ENCODE measurements at regions of chr7 and their contacts with region 1.

Region 1: DNA sequence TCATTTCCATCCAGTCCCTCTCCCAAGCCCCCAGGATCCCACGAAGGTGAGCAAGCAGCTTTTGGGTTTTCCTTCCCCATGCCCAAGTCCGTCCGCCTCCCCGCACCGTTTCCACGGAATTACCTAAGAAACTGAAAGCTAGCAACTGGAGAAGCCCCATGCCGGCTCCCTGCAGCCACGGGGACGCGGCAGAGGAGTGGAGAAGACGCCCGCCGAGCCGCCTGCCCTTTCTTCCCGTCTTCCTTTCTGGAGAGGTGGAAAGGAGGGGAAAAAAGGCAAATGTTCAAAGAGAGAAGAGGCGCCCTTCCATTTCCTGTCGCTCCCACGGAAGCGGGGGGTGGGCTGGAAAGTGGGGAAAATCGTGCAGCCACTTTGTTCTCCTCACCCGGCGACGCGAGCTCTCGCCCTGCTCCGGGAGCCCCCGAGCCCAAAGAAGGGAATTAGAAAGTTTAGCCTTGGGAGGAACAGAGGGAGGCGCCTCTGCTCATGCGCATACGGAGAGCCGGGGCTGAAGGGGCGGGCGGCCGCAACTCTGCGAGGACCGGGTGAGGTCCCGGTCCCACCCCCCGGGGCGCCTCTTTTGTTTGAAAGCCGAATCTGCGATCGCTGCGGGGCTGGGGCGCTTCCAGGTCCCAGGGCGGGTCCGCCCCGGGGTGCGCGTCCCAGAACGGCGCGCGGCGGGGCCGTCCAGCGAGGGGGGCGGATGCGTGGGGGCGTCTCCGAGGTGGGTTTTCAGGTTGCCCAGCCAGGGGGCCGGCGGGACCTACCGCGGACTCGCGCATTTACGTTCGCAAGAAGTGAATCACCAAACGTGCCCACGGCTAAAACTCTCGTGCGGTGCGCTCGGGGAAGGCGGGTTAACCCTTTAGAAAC is at the start of gene LAMB1:
- DNase-seq: peak; percentile 77 to 78
- ATAC-seq: peak; percentile 71 to 84 (median 77)
- H3K4me3 ChIP-seq: peak within 1 kb of the TSS; percentile 52 to 88 (median 74)
- H3K27ac ChIP-seq: peak within 1 kb of the TSS; percentile 70 to 93 (median 86)
- H3K4me1 ChIP-seq: peaks cover 4 to 68% (median 44%) of the 10 kb centered on the region in 9 donors
- H3K27me3 ChIP-seq: peaks cover 0 to 58% (median 0%) of the 10 kb centered on the region in 7 donors
- CTCF ChIP-seq: no peak
- total RNA-seq, gene LAMB1: 33.3 to 84.8 (median 52.7) TPM

Region 2: DNA sequence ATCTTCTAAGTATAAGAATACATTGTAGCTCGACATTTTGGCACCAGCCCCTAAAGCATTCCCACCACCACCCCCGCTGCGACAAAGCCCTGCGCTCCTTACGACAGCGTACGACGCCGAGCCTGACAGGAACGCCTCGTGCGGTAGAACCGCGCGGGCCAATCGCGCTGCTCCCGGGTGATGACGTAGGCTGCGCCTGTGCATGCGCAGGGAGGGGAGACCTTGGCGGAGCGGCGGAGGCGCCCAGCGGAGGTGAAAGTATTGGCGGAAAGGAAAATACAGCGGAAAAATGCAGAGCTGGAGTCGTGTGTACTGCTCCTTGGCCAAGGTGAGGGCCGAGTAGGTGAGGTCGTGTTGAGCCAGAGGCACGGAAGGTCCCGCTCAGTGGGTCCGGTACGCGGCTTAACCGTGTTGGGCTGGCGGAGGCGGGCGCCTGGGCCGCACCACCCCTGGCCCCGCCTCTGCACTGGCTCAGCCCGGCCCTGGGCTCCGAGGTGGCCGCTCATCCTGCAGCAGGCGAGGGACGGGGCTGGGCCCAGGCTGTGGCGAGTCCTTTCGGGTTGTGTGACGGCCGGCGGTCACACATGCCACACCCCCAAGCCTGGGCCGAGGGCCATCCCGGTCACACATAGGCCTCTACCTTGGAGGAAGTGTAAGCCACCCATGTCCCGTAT is 111.9 kb before region 1 on chr7 and contains the start of gene DLD:
- intact Hi-C with region 1: loop called in 1 of 10 experiments (anchors 10 kb)
- DNase-seq: peak; percentile 95
- ATAC-seq: peak; percentile 98 to 100 (median 99)
- H3K4me3 ChIP-seq: peak within 1 kb of the TSS; percentile 50 to 78 (median 68)
- H3K27ac ChIP-seq: peak within 1 kb of the TSS; percentile 81 to 97 (median 97)
- H3K4me1 ChIP-seq: peaks cover 13 to 52% (median 47%) of the 10 kb centered on the region in 9 donors
- H3K27me3 ChIP-seq: no peaks in the 10 kb centered on the region
- CTCF ChIP-seq: peak in 1 of 9 donors; percentile 6
- total RNA-seq, gene DLD: 257 to 402 (median 353) TPM

Region 3: GRCh38 chr7:107939573-107940489 is 63.1 kb before region 1 on chr7:
- intact Hi-C with region 1: loop called in 1 of 10 experiments (anchors 5 kb)
- DNase-seq: peak; percentile 55 to 63
- ATAC-seq: peak; percentile 30 to 68 (median 50)
- H3K4me3 ChIP-seq: no peak overlapping the region
- H3K27ac ChIP-seq: peak overlapping the region; percentile 23 to 75 (median 66)
- H3K4me1 ChIP-seq: peaks cover 16 to 69% (median 50%) of the 10 kb centered on the region in 9 donors
- H3K27me3 ChIP-seq: no peaks in the 10 kb centered on the region
- CTCF ChIP-seq: no peak

Region 4: DNA sequence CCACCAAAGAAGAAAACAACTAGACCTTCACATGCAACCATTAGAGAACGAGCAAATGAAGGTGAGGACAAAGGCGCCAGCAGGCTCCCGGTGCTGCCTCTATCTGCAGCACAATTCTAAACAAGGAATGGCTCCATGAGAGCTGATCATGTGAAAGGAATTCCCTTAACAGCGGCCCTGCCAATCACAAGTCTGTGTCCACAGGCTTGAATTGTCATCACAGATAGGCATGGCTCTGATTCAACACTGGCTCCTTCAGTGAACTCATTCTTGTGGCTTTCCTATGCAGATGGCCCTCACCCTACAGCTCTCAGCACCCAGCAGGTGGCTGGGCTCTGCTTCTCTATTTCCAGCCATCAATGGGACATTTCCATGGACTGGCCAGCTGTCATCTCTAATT is 36.3 kb before region 1 on chr7:
- intact Hi-C with region 1: loop called in 2 of 10 experiments (anchors 5 kb)
- DNase-seq: peak in 1 of 2 donors; percentile 68
- ATAC-seq: peak; percentile 72 to 95 (median 86)
- H3K4me3 ChIP-seq: no peak overlapping the region
- H3K27ac ChIP-seq: peak overlapping the region in 9 of 10 donors; percentile 4 to 84 (median 71)
- H3K4me1 ChIP-seq: peaks cover 5 to 61% (median 44%) of the 10 kb centered on the region in 9 donors
- H3K27me3 ChIP-seq: no peaks in the 10 kb centered on the region
- CTCF ChIP-seq: peak in 5 of 9 donors; percentile 12 to 48 (median 35)

Region 5: DNA sequence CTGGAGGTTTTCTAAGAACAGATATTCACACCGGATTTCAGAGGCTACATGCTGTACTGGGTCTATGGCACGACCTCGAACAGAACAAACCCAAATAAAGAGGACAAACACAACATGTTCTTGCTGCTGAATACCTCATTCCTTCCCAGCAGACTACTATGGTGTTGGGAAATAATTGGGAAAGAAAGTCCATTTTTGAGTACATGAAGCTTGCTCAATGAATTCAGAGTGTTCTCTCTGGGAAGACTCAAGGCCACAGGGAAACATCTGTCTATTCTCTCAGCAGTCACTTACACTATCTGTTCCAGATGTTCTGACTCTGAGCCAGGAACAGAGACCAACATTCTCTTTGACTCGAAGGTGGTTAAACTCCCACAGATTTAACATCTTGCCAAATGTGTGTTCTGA is 30.9 kb before region 1 on chr7:
- intact Hi-C with region 1: loop called in 3 of 10 experiments (anchors 2 to 5 kb)
- DNase-seq: peak in 1 of 2 donors; percentile 66
- ATAC-seq: peak; percentile 69 to 90 (median 86)
- H3K4me3 ChIP-seq: no peak overlapping the region
- H3K27ac ChIP-seq: peak overlapping the region; percentile 23 to 81 (median 58)
- H3K4me1 ChIP-seq: peaks cover 5 to 85% (median 66%) of the 10 kb centered on the region in 9 donors
- H3K27me3 ChIP-seq: no peaks in the 10 kb centered on the region
- CTCF ChIP-seq: no peak

Region 6: GRCh38 chr7:108094933-108095710 is 92.2 kb after region 1 on chr7:
- intact Hi-C with region 1: loop called in 3 of 10 experiments (anchors 5 to 10 kb)
- DNase-seq: peak in 1 of 2 donors; percentile 20
- ATAC-seq: peak; percentile 44 to 90 (median 76)
- H3K4me3 ChIP-seq: peak overlapping the region in 5 of 10 donors; percentile 5 to 34 (median 24)
- H3K27ac ChIP-seq: peak overlapping the region in 8 of 10 donors; percentile 4 to 85 (median 69)
- H3K4me1 ChIP-seq: peaks cover 0 to 35% (median 26%) of the 10 kb centered on the region in 9 donors
- H3K27me3 ChIP-seq: no peaks in the 10 kb centered on the region
- CTCF ChIP-seq: no peak

Measured in heart right ventricle (tissue), 16 donors.